Posterior cingulate gyrus (tissue), 11 donors: ENCODE measurements at regions of chr12 and their contacts with region 1.

Region 1: DNA sequence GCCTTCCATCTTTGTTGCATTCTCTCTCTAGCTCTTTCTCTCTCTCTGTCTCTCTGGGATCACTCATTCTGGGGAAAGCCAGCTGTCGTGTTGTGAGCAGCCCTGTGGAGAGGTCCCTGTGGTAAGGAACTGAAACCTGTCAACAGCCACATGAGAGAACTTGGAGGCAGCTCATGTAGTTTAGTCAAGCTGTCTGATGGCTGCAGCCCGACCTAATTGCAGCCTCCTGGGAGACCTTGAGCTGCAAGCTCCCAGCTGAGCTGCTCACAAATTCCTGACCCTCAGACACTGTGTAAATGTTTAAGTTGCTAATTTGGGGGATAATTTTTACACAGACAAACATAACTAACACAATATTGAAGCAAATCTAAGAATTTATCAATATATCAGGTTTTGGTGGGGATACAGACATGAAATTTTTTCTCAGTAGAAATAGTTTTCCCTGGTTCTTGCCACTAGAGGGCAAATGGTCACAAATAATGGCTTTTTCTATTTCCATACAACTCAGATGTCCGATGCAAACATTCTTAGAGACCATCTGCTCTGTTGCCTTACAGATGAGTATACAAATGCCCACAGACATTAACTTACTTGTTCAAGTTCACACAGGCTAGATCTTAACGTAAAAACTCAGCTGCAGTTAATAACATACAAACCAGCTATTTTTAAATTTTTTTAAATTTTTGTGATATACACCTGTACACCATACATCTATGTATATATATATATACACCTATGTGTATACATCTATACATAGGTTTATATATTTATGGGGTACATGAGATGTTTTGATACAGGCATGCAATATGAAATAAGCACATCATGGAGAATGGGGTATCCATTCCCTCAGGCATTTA is 15.5 kb upstream of the KRR1 start:
- DNase-seq: peak in 1 of 10 donors; percentile 65

Region 2: DNA sequence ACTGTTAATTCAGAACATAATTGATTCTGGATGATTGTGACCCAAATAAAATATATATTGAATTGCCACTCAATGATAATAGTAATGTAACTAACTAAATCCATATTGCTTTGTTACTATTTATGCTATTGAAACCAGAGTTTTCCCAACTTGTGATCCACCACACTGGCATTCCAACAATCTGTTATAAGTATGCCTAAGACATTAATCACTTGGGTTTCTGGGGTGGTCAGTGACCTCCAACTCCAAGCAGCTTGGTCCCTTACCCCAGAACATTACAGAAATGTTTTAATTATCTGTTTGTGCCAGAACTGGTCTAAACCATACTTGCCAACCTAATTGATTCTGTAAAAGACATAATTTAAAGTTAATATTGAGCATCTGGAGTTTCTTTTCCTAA is 211.4 kb before region 1 on chr12:
- intact Hi-C with region 1: no loop called
- DNase-seq: no peak

Region 3: GRCh38 chr12:75722714-75723200 is 195.9 kb after region 1 on chr12:
- intact Hi-C with region 1: loop called (anchors 10 kb)
- DNase-seq: peak in 6 of 10 donors; percentile 16 to 80 (median 46)

Region 4: DNA sequence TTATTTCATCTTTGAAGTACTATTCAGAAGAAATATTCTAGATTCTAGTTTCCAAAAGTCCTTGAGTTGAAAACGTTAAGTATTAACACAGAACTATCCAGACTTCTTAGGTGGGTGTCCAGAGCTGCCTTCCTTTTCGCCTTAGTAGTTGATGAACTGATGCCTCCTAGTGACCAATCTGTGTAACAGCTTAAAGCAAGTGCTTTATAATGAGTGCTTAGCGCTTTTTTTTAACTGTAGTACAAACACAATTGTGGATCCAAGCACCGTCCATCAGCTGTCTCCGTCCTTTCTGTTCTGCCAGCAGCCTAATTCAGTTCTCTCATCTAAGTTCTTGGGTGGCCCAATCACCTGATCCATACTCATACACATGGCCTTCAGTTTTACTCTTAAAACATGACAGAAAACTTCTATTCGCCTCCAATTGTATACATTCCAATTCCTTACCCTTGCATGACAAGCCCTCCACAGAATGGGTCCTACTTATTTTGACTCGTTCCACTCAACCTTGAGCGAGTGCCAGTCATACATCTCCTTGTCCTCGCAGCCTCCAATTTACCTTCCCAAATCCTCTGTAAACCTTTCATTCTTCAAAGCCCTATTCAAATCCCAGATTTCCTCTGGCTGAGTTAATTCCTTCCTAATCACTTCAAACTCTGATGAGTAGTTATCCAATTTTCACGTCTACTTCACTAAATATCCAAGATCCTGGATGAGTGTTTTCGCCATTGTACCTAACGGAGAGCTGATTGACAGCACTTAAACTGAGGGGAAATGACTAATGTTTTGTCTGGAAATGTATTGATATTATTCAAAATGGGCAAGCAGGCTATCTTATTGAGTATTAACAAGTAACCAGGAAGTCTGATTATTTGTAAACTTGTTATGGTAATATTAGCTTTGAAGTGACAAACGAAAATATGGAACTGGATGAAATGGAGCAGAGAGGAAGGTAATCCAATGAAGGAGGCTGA is 510.5 kb after region 1 on chr12:
- intact Hi-C with region 1: loop called (anchors 1 kb)
- DNase-seq: no peak